ENCODE measurements at regions of chr17 and their contacts with region 1.

Region 1: GRCh38 chr17:48307814-48308411 is 122.1 kb downstream of the SKAP1 start:
- H3K4me3 ChIP-seq: no peak overlapping the region
- H3K27ac ChIP-seq: no peak overlapping the region
- H3K4me1 ChIP-seq: peaks cover 6% of the 10 kb centered on the region
- CTCF ChIP-seq: peak; percentile 47; the same call in 1 of the 2 replicates

Region 2: DNA sequence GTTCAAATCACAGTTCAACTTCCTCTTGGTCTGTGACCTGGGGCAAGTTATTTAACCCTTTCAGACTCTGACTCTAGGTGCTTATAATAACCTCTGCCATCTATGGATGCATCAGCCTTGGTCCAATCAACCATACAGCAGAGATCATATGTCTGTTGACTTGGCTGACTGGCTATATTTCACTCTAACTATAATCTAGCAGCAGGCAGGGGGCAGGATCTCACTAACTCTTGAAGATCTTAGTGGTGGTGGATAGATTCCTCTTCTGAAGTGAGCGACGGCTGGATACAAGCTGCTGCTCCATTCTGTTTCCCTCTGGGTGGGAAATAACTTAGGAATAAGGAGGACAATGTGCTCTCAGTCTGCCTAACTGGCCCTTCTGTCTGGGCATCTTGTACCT is 24.5 kb before region 1 on chr17:
- CTCF ChIA-PET with region 1: interaction called, 14 read pairs
- POLR2A ChIA-PET with region 1: no interaction called
- H3K4me3 ChIP-seq: no peak overlapping the region
- H3K27ac ChIP-seq: no peak overlapping the region
- H3K4me1 ChIP-seq: peaks cover 13% of the 10 kb centered on the region
- CTCF ChIP-seq: no peak

Region 3: GRCh38 chr17:48322060-48322459 is 14.1 kb after region 1 on chr17:
- CTCF ChIA-PET with region 1: interaction called, 28 read pairs
- POLR2A ChIA-PET with region 1: no interaction called
- H3K4me3 ChIP-seq: no peak overlapping the region
- H3K27ac ChIP-seq: no peak overlapping the region
- H3K4me1 ChIP-seq: 0 out of 2 replicates have a peak, but pooled peaks cover 4% of the 10 kb centered on the region
- CTCF ChIP-seq: 0 out of 2 replicates have a peak, but pooled peaks have one; percentile 8

Region 4: DNA sequence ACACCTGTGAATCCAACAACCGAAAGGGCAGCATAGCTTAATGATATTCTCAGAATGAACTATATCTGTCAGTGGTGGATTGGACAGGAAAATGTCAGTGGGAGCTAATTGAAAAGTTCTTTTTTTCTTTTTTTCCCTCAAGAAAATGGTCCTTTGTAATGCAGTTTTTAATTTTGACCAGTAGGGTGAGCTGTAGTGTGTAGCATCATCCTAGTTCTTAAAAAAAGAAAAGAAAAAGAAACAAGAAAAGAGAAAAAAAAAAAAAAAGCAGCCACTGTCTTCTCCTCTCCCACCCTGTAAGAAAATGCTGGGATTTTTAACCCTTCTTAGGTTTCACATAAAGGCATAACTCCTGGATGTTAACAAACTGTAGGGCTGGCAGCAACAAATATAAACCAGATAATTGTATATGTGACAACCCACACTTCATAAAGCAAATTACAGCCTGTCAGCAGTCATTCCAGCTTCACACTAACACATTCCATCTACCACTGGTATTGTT is 44.0 kb after region 1 on chr17:
- CTCF ChIA-PET with region 1: interaction called, 24 read pairs
- POLR2A ChIA-PET with region 1: no interaction called
- H3K4me3 ChIP-seq: no peak overlapping the region
- H3K27ac ChIP-seq: no peak overlapping the region
- H3K4me1 ChIP-seq: peaks cover 3% of the 10 kb centered on the region; the same call in 1 of the 2 replicates
- CTCF ChIP-seq: no peak

Region 5: DNA sequence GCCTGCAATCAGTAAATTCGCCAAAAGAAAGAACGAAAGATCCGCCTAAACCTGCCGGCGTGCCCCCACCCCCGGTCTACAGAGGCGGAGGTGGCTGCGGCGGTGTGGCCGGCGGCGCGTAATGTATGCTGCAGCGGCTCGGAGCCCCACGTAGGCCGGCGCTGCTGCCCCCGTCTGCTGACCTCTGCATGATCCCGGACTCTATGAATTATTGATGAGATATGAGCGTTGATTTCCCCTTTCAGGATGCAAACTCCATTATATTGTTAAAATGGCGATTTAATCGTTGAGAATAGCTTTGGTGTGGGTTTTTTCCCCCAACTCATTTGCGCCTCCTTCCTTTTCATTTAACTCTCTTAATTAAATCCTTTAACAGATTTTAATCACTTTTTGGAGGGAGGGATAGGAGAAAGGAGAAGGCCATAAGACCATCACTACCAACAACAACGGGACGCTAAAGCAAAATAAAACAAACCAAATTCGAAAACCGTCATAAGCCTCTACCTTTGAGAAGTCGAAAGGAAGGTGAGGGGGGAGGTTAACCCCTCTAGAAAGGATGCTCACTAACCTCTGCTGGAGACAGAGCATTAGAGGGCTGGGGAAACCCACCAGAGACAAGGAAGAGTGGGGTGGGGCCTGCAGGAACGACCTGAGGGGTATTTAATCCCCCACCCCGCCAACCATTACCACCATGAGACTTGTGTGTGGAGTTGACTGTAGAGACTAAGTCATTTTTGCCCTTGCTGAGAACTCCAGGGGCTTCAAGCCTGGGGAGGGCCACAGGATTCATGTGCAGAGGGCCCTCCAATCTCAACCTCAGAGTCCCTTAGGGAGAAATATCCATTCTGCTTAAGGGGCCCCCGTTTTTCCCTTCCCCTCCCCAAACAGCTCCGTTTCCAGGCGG is 278.7 kb after region 1 on chr17:
- CTCF ChIA-PET with region 1: interaction called, 44 read pairs
- POLR2A ChIA-PET with region 1: no interaction called
- H3K4me3 ChIP-seq: peak overlapping the region; percentile 38
- H3K27ac ChIP-seq: peak overlapping the region; percentile 92
- H3K4me1 ChIP-seq: peaks cover 50% of the 10 kb centered on the region
- CTCF ChIP-seq: no peak

Region 6: DNA sequence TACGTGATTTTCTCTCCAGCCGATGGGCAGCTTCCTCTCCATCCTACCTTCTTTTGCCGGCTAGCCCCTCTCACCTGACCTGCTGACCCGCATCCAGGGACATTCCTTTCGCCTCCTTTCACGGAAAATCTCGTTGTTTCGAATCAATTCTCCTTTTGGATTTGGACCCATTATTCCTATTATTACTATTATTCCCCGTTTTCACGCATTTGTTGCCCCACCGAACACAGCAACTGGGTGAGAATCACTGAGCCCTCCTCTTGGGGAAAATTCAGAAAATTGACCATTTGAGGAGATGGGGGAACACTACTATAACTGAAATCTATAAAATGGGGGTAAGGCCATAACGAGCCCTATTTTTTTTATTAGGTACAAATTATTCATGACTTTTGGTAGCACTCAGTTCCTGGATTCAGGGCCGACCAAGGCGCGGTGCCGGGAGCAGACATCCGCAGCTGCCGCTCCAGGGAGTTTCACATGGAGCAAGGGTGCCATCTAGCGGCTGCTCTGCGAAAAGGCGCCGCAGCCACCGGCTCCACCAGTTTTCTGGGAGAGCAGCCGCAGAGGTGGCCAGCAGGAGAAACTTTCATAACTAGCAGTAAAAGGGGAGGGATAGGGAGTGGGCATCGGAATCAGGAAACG is 310.5 kb after region 1 on chr17:
- CTCF ChIA-PET with region 1: interaction called, 16 read pairs
- POLR2A ChIA-PET with region 1: no interaction called
- H3K4me3 ChIP-seq: no peak overlapping the region
- H3K27ac ChIP-seq: peak overlapping the region; percentile 44; the same call in 1 of the 2 replicates
- H3K4me1 ChIP-seq: peaks cover 48% of the 10 kb centered on the region
- CTCF ChIP-seq: peak; percentile 96

Measured in HEK293 (cell line).